ENCODE measurements at regions of chr15 and their contacts with region 1.

Region 1: DNA sequence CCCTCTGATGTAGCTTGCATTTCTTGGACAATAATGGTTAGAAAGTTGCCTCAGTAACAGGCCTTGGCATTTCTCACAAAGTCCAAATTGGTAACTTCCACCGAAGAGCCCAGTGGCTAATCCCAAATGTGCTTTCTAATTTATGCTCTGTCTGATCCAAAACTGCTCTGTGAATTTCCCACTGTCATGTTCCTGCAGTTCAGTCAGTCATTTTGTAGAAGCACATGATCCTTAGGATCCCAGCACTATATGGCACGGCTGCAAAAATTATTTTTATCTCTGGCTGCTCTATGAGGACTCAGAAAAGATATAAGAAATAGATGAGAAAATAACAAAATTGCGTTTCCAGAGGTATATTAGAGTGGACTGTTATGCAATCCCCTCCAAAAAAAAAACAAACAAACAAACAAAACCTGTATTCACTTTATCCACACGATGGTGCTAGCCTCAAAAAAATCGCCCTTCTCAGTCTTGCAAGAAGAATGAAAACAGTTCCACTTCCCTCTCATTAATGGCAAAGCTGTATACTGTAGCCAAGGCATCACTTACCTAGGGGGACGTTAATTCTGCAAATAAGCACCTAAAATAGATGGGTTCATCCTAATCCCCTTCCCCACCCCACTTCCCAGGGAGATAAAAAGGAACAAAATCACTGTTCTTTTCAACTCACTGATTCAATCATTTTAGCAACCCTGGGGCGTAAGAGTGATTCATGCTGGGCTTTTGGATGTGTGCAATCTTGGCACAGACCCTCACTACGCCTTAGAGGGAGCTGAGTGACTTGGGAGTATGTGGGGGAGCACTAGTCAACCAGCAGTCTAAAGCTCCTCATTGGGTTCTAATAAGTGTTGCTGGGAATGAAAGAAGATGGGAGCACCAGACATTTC is 61.3 kb downstream of the TMCO5A start:
- DNase-seq: peak; percentile 9 to 56 (median 46)
- H3K4me3 ChIP-seq: no peak overlapping the region
- H3K4me3 Mint-ChIP-seq: no peak overlapping the region
- H3K27ac ChIP-seq: no peak overlapping the region
- H3K27ac Mint-ChIP-seq: no peak overlapping the region
- H3K4me1 ChIP-seq: no peaks in the 10 kb centered on the region
- H3K4me1 Mint-ChIP-seq: no peaks in the 10 kb centered on the region
- H3K27me3 ChIP-seq: no peaks in the 10 kb centered on the region
- H3K27me3 Mint-ChIP-seq: peaks cover 1 to 10% (median 3%) of the 10 kb centered on the region in 3 donors
- CTCF ChIP-seq: peak; percentile 55

Region 2: DNA sequence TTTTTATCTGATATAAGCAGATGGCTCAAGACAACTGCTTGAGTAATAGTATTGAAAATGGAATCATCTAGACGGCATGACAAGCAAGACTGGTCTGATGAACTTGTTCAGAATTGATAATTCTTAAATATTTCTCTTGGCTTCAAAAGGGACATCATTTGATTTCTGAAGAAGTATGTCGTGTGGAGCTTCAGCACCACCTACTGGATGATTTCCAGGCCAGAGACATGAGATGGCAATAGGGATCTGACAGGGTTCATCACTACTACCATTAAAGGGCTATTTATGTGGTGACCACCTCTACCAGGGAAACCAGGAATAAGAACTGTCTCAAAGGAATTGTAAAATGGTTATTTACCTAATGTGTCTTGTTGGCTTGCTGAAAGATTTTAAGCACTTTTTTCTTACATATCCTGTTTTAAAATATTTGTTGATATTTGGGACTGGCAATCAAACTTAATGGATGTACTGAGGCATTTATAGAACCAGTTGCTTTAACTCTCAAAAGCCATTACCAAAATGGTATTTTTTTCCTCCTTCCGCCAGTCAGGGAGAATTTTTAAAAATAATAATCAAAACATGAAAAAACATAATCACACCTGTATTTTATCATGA is 358.7 kb after region 1 on chr15:
- intact Hi-C with region 1: loop called in 1 of 2 experiments (anchors 2 kb)
- DNase-seq: peak; percentile 33 to 57 (median 44)
- H3K4me3 ChIP-seq: no peak overlapping the region
- H3K4me3 Mint-ChIP-seq: no peak overlapping the region
- H3K27ac ChIP-seq: no peak overlapping the region
- H3K27ac Mint-ChIP-seq: no peak overlapping the region
- H3K4me1 ChIP-seq: no peaks in the 10 kb centered on the region
- H3K4me1 Mint-ChIP-seq: no peaks in the 10 kb centered on the region
- H3K27me3 ChIP-seq: no peaks in the 10 kb centered on the region
- H3K27me3 Mint-ChIP-seq: no peaks in the 10 kb centered on the region
- CTCF ChIP-seq: peak; percentile 76

Region 3: GRCh38 chr15:38389924-38390542 is 394.3 kb after region 1 on chr15:
- intact Hi-C with region 1: loop called in 1 of 2 experiments (anchors 5 kb)
- DNase-seq: peak; percentile 13 to 41 (median 32)
- H3K4me3 ChIP-seq: no peak overlapping the region
- H3K4me3 Mint-ChIP-seq: no peak overlapping the region
- H3K27ac ChIP-seq: no peak overlapping the region
- H3K27ac Mint-ChIP-seq: no peak overlapping the region
- H3K4me1 ChIP-seq: no peaks in the 10 kb centered on the region
- H3K4me1 Mint-ChIP-seq: no peaks in the 10 kb centered on the region
- H3K27me3 ChIP-seq: no peaks in the 10 kb centered on the region
- H3K27me3 Mint-ChIP-seq: peaks cover 4 to 5% (median 5%) of the 10 kb centered on the region in 3 donors
- CTCF ChIP-seq: peak; percentile 95

Region 4: DNA sequence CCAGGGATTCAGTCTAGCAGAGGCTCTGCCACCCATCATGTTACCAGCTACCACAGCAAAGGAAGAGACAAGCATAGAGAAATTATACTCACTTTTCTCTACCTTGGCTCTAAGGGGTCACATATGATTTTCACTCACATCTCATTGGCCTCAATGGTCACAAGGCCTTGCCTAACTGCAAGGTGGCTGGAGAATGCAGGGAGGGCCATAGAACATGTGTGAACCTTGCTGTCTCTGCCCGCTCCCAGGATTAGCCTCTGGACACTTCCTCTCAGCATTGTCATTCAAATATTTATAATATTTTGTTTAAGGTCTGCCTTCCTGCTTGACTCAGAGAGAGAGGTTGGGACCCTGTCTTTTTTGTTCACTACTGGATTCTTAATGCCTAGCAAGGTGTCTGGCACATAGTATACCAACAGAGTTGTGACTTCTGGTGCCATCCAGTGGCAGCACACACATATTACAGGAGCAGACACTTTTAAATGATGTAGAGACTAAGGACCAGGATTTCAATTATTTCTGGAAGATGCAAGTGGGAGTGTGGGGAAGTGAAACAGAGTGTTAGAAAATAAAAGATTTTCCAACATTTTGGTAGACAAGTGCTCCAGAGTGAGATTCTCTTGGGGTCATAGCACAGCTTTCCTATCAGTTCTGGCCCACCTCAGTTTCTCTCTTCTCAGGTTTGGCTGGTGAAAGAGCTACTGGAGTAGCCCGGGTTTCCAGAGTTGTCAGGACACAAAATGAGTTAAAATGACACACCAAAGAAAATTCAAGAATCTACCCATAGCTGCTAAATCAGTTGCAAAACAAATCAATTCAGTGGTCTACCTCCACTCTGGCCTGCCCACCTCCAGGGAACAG is 687.9 kb after region 1 on chr15:
- intact Hi-C with region 1: loop called (anchors 10 kb)
- DNase-seq: peak in 2 of 3 donors; percentile 29 to 46
- H3K4me3 ChIP-seq: no peak overlapping the region
- H3K4me3 Mint-ChIP-seq: no peak overlapping the region
- H3K27ac ChIP-seq: no peak overlapping the region
- H3K27ac Mint-ChIP-seq: no peak overlapping the region
- H3K4me1 ChIP-seq: peaks cover 0 to 14% of the 10 kb centered on the region in 2 donors
- H3K4me1 Mint-ChIP-seq: peaks cover 16% of the 10 kb centered on the region
- H3K27me3 ChIP-seq: no peaks in the 10 kb centered on the region
- H3K27me3 Mint-ChIP-seq: no peaks in the 10 kb centered on the region
- CTCF ChIP-seq: peak; percentile 87

Measured in CD14-positive monocyte (primary cell).